ENCODE measurements at regions of chr2 and their contacts with region 1.

Region 1: DNA sequence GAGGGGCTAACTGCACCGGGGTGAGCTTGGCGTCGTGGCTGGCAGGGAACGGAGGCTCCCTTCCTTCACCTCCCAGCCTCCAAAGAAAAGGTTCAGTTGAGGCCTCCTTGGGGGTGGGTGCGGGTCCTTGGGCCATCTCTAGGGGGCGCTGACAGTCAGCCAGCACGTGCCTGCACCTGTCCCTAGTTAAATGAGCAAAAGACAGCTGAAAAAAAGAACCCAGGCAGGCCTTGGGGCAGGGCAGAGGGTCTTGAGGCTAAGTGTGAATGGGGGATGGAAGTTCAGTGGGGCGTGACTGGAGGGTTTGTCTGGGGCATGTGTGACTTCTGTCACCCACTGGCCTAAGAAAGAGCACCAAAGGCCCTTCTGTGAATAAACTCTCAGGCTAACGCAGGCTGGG is 56.4 kb downstream of the ZFP36L2 start:
- DNase-seq: peak; percentile 35 to 78 (median 61)
- ATAC-seq: peak; percentile 11 to 34 (median 29)
- H3K4me3 ChIP-seq: peak overlapping the region; percentile 24 to 30
- H3K4me3 Mint-ChIP-seq: peak overlapping the region; percentile 70 to 85 (median 75)
- H3K27ac ChIP-seq: peak overlapping the region; percentile 100
- H3K27ac Mint-ChIP-seq: peak overlapping the region; percentile 99 to 100
- H3K4me1 ChIP-seq: peaks cover 48 to 90% of the 10 kb centered on the region in 2 experiments
- H3K4me1 Mint-ChIP-seq: peaks cover 85 to 86% (median 86%) of the 10 kb centered on the region in 3 donors
- H3K27me3 ChIP-seq: no peaks in the 10 kb centered on the region
- H3K27me3 Mint-ChIP-seq: no peaks in the 10 kb centered on the region

Region 2: GRCh38 chr2:43142921-43143438 is 27.0 kb before region 1 on chr2:
- CTCF ChIA-PET with region 1: interaction called, 4 to 11 read pairs
- POLR2A ChIA-PET with region 1: interaction called, 6 to 19 read pairs
- DNase-seq: peak in 9 of 35 experiments; percentile 32 to 57 (median 45)
- ATAC-seq: peak; percentile 60 to 75 (median 71)
- H3K4me3 ChIP-seq: peak overlapping the region; percentile 46 to 50
- H3K4me3 Mint-ChIP-seq: peak overlapping the region; percentile 69 to 74 (median 73)
- H3K27ac ChIP-seq: peak overlapping the region; percentile 64
- H3K27ac Mint-ChIP-seq: peak overlapping the region; percentile 86 to 91
- H3K4me1 ChIP-seq: peaks cover 41 to 67% of the 10 kb centered on the region in 2 experiments
- H3K4me1 Mint-ChIP-seq: peaks cover 68 to 78% (median 71%) of the 10 kb centered on the region in 3 donors
- H3K27me3 ChIP-seq: no peaks in the 10 kb centered on the region
- H3K27me3 Mint-ChIP-seq: no peaks in the 10 kb centered on the region

Region 3: GRCh38 chr2:43194121-43194869 is 24.3 kb after region 1 on chr2:
- CTCF ChIA-PET with region 1: interaction called, 6 read pairs
- POLR2A ChIA-PET with region 1: interaction called, 12 read pairs
- DNase-seq: no peak
- ATAC-seq: peak in 3 of 4 experiments; percentile 9 to 11 (median 11)
- H3K4me3 ChIP-seq: peak overlapping the region; percentile 53 to 71
- H3K4me3 Mint-ChIP-seq: peak overlapping the region; percentile 83 to 87 (median 86)
- H3K27ac ChIP-seq: peak overlapping the region; percentile 98
- H3K27ac Mint-ChIP-seq: peak overlapping the region; percentile 100
- H3K4me1 ChIP-seq: peaks cover 35 to 93% of the 10 kb centered on the region in 2 experiments
- H3K4me1 Mint-ChIP-seq: peaks cover 58 to 71% (median 63%) of the 10 kb centered on the region in 3 donors
- H3K27me3 ChIP-seq: no peaks in the 10 kb centered on the region
- H3K27me3 Mint-ChIP-seq: no peaks in the 10 kb centered on the region

Region 4: DNA sequence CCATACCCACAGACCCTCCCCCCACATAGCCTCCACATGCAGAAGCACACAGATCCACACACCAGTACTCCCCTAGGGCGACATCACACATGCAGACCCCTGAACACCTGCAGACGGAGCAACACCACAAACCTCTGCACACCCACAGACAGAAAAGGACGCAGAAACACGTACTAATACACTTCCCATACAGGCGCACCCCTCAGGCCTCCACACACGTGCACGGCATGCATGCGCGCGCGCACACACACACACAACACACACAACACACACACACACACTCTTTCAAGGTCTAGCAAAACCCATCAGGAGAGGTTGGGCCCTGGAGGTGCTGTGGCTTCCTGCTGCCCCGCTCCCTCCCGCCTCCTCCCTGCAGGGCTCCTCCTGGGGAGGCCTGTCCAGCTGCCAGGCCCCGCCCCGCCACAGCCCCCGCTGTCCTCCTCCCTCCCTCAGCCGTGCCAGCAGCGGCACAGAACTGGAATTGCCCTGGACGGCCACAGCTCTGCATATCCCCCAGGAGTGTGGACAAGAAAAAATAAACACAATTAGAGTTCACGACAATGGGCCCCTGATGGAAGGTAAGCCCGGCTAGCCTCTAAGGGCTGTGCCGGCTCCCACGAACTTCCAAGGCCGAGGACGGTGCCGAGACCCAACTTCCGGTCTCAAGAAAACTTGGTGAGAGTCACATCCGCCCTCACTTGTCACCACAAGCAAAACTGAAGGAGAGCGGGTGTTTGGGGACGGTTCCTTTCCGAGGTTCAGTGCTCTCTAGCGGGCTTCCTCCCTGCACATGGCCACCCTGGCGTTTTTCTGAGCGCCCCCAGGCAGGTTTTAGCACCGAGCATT is 49.6 kb after region 1 on chr2:
- CTCF ChIA-PET with region 1: interaction called, 5 to 12 read pairs
- POLR2A ChIA-PET with region 1: interaction called, 18 to 22 read pairs
- DNase-seq: peak; percentile 71 to 91 (median 80)
- ATAC-seq: peak; percentile 44 to 58 (median 48)
- H3K4me3 ChIP-seq: peak overlapping the region; percentile 86 to 98
- H3K4me3 Mint-ChIP-seq: peak overlapping the region; percentile 74 to 98 (median 91)
- H3K27ac ChIP-seq: peak overlapping the region; percentile 94
- H3K27ac Mint-ChIP-seq: peak overlapping the region; percentile 94 to 97
- H3K4me1 ChIP-seq: peaks cover 27 to 67% of the 10 kb centered on the region in 2 experiments
- H3K4me1 Mint-ChIP-seq: peaks cover 52 to 59% (median 58%) of the 10 kb centered on the region in 3 donors
- H3K27me3 ChIP-seq: no peaks in the 10 kb centered on the region
- H3K27me3 Mint-ChIP-seq: peaks cover 0 to 3% of the 10 kb centered on the region in 2 donors

Measured in T-cell (primary cell).